ENCODE measurements at regions of chr4 and their contacts with region 1.

Region 1: DNA sequence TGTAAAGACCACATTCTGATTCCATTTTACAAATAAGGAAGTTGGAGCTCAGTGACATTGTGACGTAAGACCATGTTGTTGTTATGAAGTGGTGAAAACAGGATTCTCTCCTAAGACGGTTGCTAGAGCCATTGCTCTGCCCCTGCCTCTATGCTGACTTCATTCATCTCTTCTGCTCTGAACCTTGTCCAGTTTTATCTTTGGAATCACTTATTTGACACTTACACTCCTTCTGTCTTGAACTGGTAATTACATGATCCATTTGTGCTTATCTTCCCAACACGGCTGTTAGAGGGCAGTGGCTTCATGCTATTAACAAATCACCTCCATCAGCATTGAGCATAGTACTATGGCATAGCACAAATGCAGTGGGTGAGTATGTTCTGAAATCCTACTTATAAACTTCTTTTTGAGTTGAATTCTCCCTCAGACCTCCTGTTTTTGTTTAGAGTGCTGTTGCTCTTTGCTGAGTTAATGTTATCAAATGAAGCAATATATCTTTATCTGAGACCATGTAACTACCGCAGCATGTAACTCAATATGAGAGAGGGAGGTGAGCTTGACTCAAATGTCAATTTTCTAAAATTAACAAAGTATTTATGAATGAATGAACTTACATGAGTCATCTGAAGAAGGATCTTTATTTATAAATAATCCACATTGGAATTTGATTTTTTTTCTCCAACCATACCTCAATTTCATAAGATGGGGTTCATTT is 177.8 kb downstream of the RASL11B start:
- DNase-seq: no peak
- H3K4me3 ChIP-seq: no peak overlapping the region
- H3K4me3 Mint-ChIP-seq: no peak overlapping the region
- H3K27ac Mint-ChIP-seq: no peak overlapping the region
- H3K4me1 ChIP-seq: peaks cover under 1% of the 10 kb centered on the region; the same call in 1 of the 2 replicates
- H3K4me1 Mint-ChIP-seq: peaks cover 17% of the 10 kb centered on the region
- H3K27me3 ChIP-seq: no peaks in the 10 kb centered on the region
- H3K27me3 Mint-ChIP-seq: no peaks in the 10 kb centered on the region
- CTCF ChIP-seq: no peak

Region 2: GRCh38 chr4:52915730-52916300 is 124.1 kb before region 1 on chr4:
- CTCF ChIA-PET with region 1: no interaction called
- POLR2A ChIA-PET with region 1: no interaction called
- intact Hi-C with region 1: no loop called
- DNase-seq: no peak
- H3K4me3 ChIP-seq: no peak overlapping the region
- H3K4me3 Mint-ChIP-seq: no peak overlapping the region
- H3K27ac Mint-ChIP-seq: peak overlapping the region; percentile 96
- H3K4me1 ChIP-seq: peaks cover 42% of the 10 kb centered on the region
- H3K4me1 Mint-ChIP-seq: peaks cover 25% of the 10 kb centered on the region
- H3K27me3 ChIP-seq: no peaks in the 10 kb centered on the region
- H3K27me3 Mint-ChIP-seq: no peaks in the 10 kb centered on the region
- CTCF ChIP-seq: no peak

Region 3: GRCh38 chr4:53119680-53120079 is 79.8 kb after region 1 on chr4:
- CTCF ChIA-PET with region 1: no interaction called
- POLR2A ChIA-PET with region 1: no interaction called
- intact Hi-C with region 1: loop called (anchors 5 kb)
- DNase-seq: peak; percentile 65 to 75
- H3K4me3 ChIP-seq: no peak overlapping the region
- H3K4me3 Mint-ChIP-seq: no peak overlapping the region
- H3K27ac Mint-ChIP-seq: peak overlapping the region; percentile 79
- H3K4me1 ChIP-seq: peaks cover 37% of the 10 kb centered on the region
- H3K4me1 Mint-ChIP-seq: no peaks in the 10 kb centered on the region
- H3K27me3 ChIP-seq: no peaks in the 10 kb centered on the region
- H3K27me3 Mint-ChIP-seq: no peaks in the 10 kb centered on the region
- CTCF ChIP-seq: no peak

Measured in Caco-2 (cell line).